A673 (cell line): ENCODE measurements at regions of chr17 and their contacts with region 1.

Region 1: DNA sequence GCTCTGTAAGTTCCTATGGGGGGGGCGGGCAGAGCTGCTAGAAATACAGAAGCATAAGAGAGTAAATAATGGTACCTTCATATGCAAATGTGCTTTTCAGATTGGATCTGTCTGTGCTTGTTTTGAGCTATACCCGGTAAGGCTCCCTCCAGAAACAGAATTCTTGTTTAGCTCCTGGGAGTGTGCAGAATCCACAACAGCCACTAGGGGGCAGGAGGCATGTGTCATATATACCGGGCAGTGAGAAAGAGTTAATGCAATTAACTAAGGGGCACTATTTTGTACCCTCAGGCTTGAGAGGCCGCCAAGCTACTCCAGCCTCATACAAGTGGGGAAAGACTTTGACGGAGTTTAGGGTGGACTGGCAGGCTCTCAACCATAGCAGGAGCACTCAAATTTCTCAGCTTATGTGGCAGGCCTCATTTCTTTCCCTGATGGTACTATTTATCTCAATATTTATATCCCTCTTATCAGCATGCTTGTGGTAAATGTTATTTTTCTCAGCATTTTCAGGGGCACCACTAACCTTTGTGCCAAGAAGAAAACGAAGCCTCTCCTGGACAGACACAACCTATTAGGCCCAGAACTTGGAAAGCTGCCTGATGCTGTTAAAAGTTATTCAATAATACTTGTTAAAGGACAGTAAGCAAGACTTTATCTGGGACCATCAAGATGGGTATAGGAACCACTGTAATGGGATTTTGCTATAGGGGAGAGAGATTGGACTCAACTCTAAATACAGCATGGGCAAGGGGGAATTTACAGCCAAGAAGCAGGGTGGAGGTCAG is 10.7 kb upstream of the CENPV start:
- DNase-seq: peak; percentile 83
- H3K4me3 ChIP-seq: no peak overlapping the region
- H3K27ac ChIP-seq: no peak overlapping the region
- H3K4me1 ChIP-seq: no peaks in the 10 kb centered on the region
- H3K27me3 ChIP-seq: no peaks in the 10 kb centered on the region
- CTCF ChIP-seq: peak; percentile 96

Region 2: DNA sequence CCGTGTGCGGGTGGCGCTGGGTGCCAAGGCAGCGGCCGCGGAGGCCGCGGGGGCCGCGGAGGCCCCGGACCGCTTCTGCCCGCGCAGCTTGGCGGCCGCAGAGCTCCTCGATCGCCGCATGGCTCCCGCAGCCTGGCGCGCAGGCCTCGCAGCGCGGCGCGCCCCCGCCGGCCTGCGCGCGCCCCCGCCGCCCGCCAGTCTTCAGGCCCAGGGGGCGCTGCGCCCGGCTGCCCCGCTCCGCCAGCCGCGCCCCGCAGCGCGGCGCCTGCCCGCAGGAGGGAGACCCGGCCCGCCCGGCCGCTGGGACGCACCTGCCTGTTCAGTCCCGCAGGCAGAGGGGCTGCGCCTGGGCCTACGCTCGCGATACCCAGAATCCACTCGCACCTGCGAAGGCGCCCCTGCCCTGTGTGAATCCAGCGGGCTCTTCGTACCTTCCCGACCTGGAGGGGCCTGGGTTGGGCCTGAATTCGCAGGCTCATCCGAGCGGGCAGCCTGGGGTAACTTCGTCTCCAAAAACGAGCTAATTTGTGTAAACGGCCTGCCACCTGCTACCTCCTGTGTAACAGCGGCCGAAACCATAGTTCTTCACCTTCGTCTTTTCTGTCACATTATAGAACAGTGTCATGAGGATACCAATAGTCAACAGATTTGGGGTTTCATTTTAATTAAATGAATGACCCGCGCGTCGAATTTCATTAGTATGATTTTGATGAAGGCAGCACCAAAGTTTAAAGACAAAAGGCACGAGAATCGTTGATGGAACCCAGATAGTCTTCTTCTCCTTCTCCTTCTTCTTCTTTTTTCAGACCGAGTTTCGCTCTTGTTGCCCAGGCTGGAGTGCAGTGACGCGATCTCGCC is 10.4 kb before region 1 on chr17 and contains the start of gene CENPV:
- CTCF ChIA-PET with region 1: interaction called, 16 read pairs
- POLR2A ChIA-PET with region 1: no interaction called
- intact Hi-C with region 1: no loop called
- DNase-seq: peak; percentile 78
- H3K4me3 ChIP-seq: peak within 1 kb of the TSS; percentile 63
- H3K27ac ChIP-seq: peak within 1 kb of the TSS; percentile 81
- H3K4me1 ChIP-seq: peaks cover 6% of the 10 kb centered on the region
- H3K27me3 ChIP-seq: no peaks in the 10 kb centered on the region
- CTCF ChIP-seq: no peak; the same call in 1 of the 2 replicates
- total RNA-seq, gene CENPV: 147 and 166 TPM in 2 replicates